Heart left ventricle (tissue), 16 donors: ENCODE measurements at regions of chr15 and their contacts with region 1.

Region 1: GRCh38 chr15:45714590-45715488 is 80.0 kb downstream of the SQOR start:
- DNase-seq: peak; percentile 49 to 67 (median 58)
- ATAC-seq: peak in 3 of 4 donors; percentile 77 to 89 (median 79)
- H3K4me3 ChIP-seq: peak overlapping the region in 2 of 12 donors; percentile 12 to 25
- H3K27ac ChIP-seq: peak overlapping the region in 1 of 12 donors; percentile 45
- H3K4me1 ChIP-seq: peaks cover 0 to 13% (median 2%) of the 10 kb centered on the region in 12 donors
- H3K27me3 ChIP-seq: peaks cover 0 to 5% (median 0%) of the 10 kb centered on the region in 9 donors
- CTCF ChIP-seq: peak; percentile 78 to 94 (median 90)
- POLR2A ChIP-seq: no peak

Region 2: DNA sequence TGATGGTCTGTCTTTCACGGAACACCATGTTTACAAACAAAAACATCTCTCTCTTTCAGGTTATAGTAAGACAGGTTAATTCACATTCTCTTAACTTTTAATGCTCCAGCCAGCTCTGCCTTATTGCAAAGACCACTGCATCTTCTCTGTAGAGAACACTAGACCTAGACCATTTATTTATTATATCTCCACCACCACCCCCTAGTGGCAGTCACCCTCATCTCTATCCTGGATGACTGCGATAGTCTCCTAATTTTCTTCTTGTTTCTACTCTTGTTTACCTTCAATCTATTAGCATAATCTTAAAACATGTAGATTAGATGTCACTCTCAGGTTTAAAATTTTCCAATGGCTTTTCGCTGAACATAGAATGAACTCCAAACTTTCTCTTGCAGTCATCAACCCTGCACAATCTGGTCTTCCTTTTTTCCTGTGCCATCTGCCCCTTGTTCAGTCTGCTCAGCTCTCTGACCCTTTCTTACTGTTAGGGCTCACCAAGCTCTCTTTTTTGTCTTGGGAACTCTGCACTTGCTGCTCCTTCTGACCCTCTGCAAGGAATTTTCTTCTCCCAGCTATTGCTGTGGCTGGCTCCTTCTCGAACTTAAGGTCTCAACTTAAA is 75.6 kb after region 1 on chr15:
- intact Hi-C with region 1: loop called (anchors 1 to 2 kb)
- DNase-seq: peak in 1 of 5 donors; percentile 25
- ATAC-seq: peak in 3 of 4 donors; percentile 55 to 72 (median 69)
- H3K4me3 ChIP-seq: no peak overlapping the region
- H3K27ac ChIP-seq: no peak overlapping the region
- H3K4me1 ChIP-seq: no peaks in the 10 kb centered on the region
- H3K27me3 ChIP-seq: peaks cover 0 to 8% (median 0%) of the 10 kb centered on the region in 9 donors
- CTCF ChIP-seq: peak; percentile 43 to 76 (median 62)
- POLR2A ChIP-seq: no peak

Region 3: DNA sequence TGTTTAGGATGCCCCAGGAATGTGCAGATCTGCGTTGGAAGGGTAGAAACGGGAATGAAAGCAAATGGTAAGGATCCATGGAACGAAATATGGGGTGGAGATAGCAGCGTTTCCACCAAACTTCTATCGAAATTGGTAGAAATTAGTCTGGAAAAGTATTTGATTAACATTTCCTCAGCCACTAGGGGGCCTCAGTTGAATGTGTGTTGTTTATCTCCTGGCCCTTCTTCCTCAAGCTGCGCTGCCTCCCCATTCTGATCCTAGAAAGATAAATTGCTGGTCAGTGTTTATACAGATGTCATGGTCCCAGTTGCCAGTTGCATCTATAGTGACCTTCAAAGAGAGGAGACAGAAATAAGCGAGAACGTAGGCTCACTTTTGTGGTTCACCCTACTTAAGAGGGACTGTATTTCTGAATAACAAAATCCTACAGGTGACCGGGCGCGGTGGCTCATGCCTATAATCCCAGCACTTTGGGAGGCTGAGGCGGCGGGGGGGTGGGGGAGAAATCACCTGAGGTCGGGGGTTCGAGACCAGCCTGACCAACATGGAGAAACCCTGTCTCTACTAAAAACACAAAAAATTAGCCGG is 377.1 kb after region 1 on chr15:
- intact Hi-C with region 1: loop called in 2 of 10 experiments (anchors 10 kb)
- DNase-seq: peak in 1 of 5 donors; percentile 10
- ATAC-seq: no peak
- H3K4me3 ChIP-seq: no peak overlapping the region
- H3K27ac ChIP-seq: no peak overlapping the region
- H3K4me1 ChIP-seq: peaks cover 0 to 24% (median 2%) of the 10 kb centered on the region in 12 donors
- H3K27me3 ChIP-seq: no peaks in the 10 kb centered on the region
- CTCF ChIP-seq: peak; percentile 26 to 57 (median 39)
- POLR2A ChIP-seq: no peak

Region 4: GRCh38 chr15:46304320-46304719 is 589.5 kb after region 1 on chr15:
- intact Hi-C with region 1: loop called in 1 of 10 experiments (anchors 10 kb)
- DNase-seq: no peak
- ATAC-seq: no peak
- H3K4me3 ChIP-seq: no peak overlapping the region
- H3K27ac ChIP-seq: no peak overlapping the region
- H3K4me1 ChIP-seq: peaks cover 0 to 6% (median 0%) of the 10 kb centered on the region in 12 donors
- H3K27me3 ChIP-seq: no peaks in the 10 kb centered on the region
- CTCF ChIP-seq: peak in 4 of 12 donors; percentile 10 to 24 (median 17)
- POLR2A ChIP-seq: no peak